WTC11 (cell line): ENCODE measurements at regions of chr5 and their contacts with region 1.

Region 1: GRCh38 chr5:140357726-140358093 is 2.3 kb upstream of the SLC4A9 start:
- DNase-seq: peak; percentile 87
- ATAC-seq: peak; percentile 93
- H3K4me3 Mint-ChIP-seq: peak overlapping the region; percentile 61
- H3K27ac Mint-ChIP-seq: peak overlapping the region; percentile 95
- H3K4me1 Mint-ChIP-seq: peaks cover 10% of the 10 kb centered on the region
- H3K27me3 Mint-ChIP-seq: peaks cover 8% of the 10 kb centered on the region; the same call in 1 of the 2 replicates
- CTCF ChIP-seq: peak; percentile 69

Region 2: GRCh38 chr5:140235791-140236551 is 121.7 kb before region 1 on chr5:
- CTCF ChIA-PET with region 1: interaction called, 621 read pairs
- POLR2A ChIA-PET with region 1: no interaction called
- DNase-seq: no peak
- ATAC-seq: no peak
- H3K4me3 Mint-ChIP-seq: no peak overlapping the region
- H3K27ac Mint-ChIP-seq: no peak overlapping the region
- H3K4me1 Mint-ChIP-seq: peaks cover 2% of the 10 kb centered on the region
- H3K27me3 Mint-ChIP-seq: no peaks in the 10 kb centered on the region
- CTCF ChIP-seq: no peak

Region 3: GRCh38 chr5:140322751-140323731 is 34.7 kb before region 1 on chr5:
- CTCF ChIA-PET with region 1: interaction called, 13 read pairs
- POLR2A ChIA-PET with region 1: no interaction called
- DNase-seq: no peak
- ATAC-seq: no peak
- H3K4me3 Mint-ChIP-seq: no peak overlapping the region
- H3K27ac Mint-ChIP-seq: no peak overlapping the region
- H3K4me1 Mint-ChIP-seq: peaks cover 12% of the 10 kb centered on the region
- H3K27me3 Mint-ChIP-seq: peaks cover 3% of the 10 kb centered on the region
- CTCF ChIP-seq: no peak

Region 4: GRCh38 chr5:140401362-140402257 is 43.9 kb after region 1 on chr5 and contains the start of gene ANKHD1:
- CTCF ChIA-PET with region 1: interaction called, 14 read pairs
- POLR2A ChIA-PET with region 1: interaction called, 3 read pairs
- DNase-seq: peak; percentile 98
- ATAC-seq: peak; percentile 87
- H3K4me3 Mint-ChIP-seq: no peak within 1 kb of the TSS
- H3K27ac Mint-ChIP-seq: peak within 1 kb of the TSS; percentile 95
- H3K4me1 Mint-ChIP-seq: peaks cover 47% of the 10 kb centered on the region
- H3K27me3 Mint-ChIP-seq: no peaks in the 10 kb centered on the region
- CTCF ChIP-seq: no peak
- total RNA-seq, gene ANKHD1: 89.8 to 113 TPM (median 105 TPM) in 3 replicates